ENCODE measurements at regions of chrX and their contacts with region 1.

Region 1: DNA sequence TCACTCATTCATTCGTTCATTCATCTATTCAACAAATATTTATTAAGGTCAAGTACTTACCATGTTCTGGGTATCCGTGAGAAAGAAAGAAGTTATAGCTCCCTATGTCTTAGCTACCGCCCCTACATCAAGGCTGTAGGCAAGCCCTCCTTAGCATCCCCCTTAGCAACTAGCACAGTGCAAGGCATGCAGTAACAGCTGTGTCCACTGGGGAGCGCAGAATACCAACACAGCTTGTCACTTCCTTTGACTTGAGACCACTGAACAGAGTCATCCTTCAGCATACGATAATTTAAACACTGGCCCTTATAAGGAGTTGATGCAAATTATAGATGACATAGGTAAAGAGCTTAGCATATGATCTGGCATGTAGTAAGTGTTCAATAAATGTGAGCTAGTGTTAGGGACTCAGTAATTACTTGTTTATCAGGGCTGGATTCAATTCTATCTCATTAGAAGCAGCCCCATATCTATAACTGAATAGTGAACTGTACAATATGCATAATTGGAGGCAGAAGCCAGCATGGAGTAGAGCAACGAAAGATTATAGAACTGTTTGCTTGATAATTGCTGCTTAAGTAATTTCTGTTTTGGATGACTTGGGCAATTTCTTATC is 8.7 kb downstream of the KIAA1210 start:
- DNase-seq: peak; percentile 3 to 41 (median 20)
- ATAC-seq: peak; percentile 75
- H3K4me3 ChIP-seq: no peak overlapping the region
- H3K4me3 Mint-ChIP-seq: no peak overlapping the region
- H3K27ac ChIP-seq: no peak overlapping the region
- H3K27ac Mint-ChIP-seq: no peak overlapping the region
- H3K4me1 ChIP-seq: no peaks in the 10 kb centered on the region
- H3K4me1 Mint-ChIP-seq: no peaks in the 10 kb centered on the region
- H3K27me3 ChIP-seq: no peaks in the 10 kb centered on the region
- H3K27me3 Mint-ChIP-seq: peaks cover 0 to 9% (median 4%) of the 10 kb centered on the region in 5 donors

Region 2: GRCh38 chrX:119181491-119181890 is 62.6 kb after region 1 on chrX:
- CTCF ChIA-PET with region 1: no interaction called
- POLR2A ChIA-PET with region 1: no interaction called
- intact Hi-C with region 1: no loop called
- DNase-seq: no peak
- ATAC-seq: no peak
- H3K4me3 ChIP-seq: no peak overlapping the region
- H3K4me3 Mint-ChIP-seq: no peak overlapping the region
- H3K27ac ChIP-seq: no peak overlapping the region
- H3K27ac Mint-ChIP-seq: no peak overlapping the region
- H3K4me1 ChIP-seq: no peaks in the 10 kb centered on the region
- H3K4me1 Mint-ChIP-seq: no peaks in the 10 kb centered on the region
- H3K27me3 ChIP-seq: no peaks in the 10 kb centered on the region
- H3K27me3 Mint-ChIP-seq: peaks cover 0 to 4% (median 0%) of the 10 kb centered on the region in 5 donors

Region 3: DNA sequence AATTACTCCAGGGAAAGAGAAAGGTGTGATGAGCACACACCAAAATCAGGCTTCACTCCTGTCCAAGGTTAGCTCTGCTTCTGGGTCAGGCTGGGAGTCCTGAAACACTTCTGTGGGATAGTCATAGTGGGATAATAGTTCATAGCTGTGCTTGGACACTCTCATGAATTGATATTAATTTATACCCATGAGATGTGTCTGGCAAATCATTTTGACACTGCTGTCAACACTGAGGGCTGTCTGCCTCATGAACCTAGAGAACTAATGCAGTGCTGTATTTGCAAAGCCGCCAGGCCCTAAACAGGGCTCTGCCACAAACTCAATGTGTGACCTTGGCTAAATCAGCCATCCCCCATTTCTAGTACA is 92.7 kb after region 1 on chrX:
- CTCF ChIA-PET with region 1: no interaction called
- POLR2A ChIA-PET with region 1: no interaction called
- intact Hi-C with region 1: loop called in 1 of 2 experiments (anchors 5 kb)
- DNase-seq: no peak
- ATAC-seq: no peak
- H3K4me3 ChIP-seq: no peak overlapping the region
- H3K4me3 Mint-ChIP-seq: no peak overlapping the region
- H3K27ac ChIP-seq: no peak overlapping the region
- H3K27ac Mint-ChIP-seq: no peak overlapping the region
- H3K4me1 ChIP-seq: no peaks in the 10 kb centered on the region
- H3K4me1 Mint-ChIP-seq: peaks cover 0 to 2% (median 0%) of the 10 kb centered on the region in 7 donors
- H3K27me3 ChIP-seq: no peaks in the 10 kb centered on the region
- H3K27me3 Mint-ChIP-seq: peaks cover 0 to 18% (median 11%) of the 10 kb centered on the region in 5 donors

Region 4: DNA sequence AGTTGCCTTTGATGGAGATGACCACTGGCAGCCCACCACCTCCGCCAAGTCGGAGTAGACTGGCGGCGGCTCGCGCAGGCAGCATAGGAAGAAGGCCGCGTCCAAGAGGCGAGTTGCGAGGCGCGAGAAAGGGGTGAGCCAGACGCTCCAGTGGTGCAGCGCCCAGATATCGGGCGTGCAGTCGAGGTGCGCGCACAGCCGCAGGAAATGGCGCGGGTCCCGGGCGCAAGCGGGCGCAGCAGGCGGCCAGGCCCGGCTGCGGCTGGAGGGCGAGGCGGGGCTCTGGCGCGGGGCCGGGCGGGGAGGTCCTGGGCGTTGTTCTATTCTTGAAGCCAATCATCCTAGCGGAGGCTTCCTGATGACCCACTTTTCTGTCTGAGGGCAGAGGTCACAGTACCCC is 104.0 kb after region 1 on chrX:
- CTCF ChIA-PET with region 1: no interaction called
- POLR2A ChIA-PET with region 1: no interaction called
- intact Hi-C with region 1: loop called (anchors 1 to 5 kb)
- DNase-seq: no peak
- ATAC-seq: no peak
- H3K4me3 ChIP-seq: no peak overlapping the region
- H3K4me3 Mint-ChIP-seq: no peak overlapping the region
- H3K27ac ChIP-seq: no peak overlapping the region
- H3K27ac Mint-ChIP-seq: no peak overlapping the region
- H3K4me1 ChIP-seq: no peaks in the 10 kb centered on the region
- H3K4me1 Mint-ChIP-seq: peaks cover 0 to 5% (median 0%) of the 10 kb centered on the region in 7 donors
- H3K27me3 ChIP-seq: no peaks in the 10 kb centered on the region
- H3K27me3 Mint-ChIP-seq: peaks cover 0 to 34% (median 19%) of the 10 kb centered on the region in 5 donors

Region 5: DNA sequence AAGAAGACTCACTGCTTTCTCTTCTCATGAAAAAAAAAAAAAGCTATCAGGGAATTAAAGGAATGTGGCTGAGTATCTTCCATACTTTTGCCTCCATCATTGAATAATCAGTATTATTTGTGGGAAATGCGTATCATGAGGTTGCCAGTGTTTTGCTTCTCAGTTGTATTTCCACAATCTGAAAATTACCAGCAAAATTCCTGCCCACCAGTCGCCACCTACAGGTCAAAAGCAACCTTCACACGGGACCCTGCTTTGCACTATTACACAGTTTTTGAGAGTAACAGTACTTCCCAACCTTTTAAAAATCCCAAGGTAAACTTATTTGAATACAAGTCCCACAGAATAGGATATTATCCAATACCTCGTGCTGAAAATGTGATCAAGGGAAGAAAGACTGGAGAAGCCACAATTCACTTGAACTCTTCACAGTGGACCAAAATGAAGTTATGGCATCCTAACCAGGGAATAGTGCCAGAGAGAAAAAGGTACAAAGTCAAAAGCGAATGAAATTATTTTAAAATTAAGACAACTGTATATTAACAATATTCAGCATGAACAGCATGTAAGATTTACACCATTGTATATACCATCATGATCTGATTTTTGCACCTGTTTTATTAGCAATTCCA is 147.6 kb after region 1 on chrX:
- CTCF ChIA-PET with region 1: interaction called, 5 read pairs
- POLR2A ChIA-PET with region 1: no interaction called
- intact Hi-C with region 1: loop called (anchors 1 kb)
- DNase-seq: peak in 4 of 9 donors; percentile 5 to 27 (median 14)
- ATAC-seq: no peak
- H3K4me3 ChIP-seq: no peak overlapping the region
- H3K4me3 Mint-ChIP-seq: no peak overlapping the region
- H3K27ac ChIP-seq: no peak overlapping the region
- H3K27ac Mint-ChIP-seq: no peak overlapping the region
- H3K4me1 ChIP-seq: no peaks in the 10 kb centered on the region
- H3K4me1 Mint-ChIP-seq: no peaks in the 10 kb centered on the region
- H3K27me3 ChIP-seq: no peaks in the 10 kb centered on the region
- H3K27me3 Mint-ChIP-seq: peaks cover 0 to 29% (median 0%) of the 10 kb centered on the region in 5 donors